Endothelial cell of umbilical vein (primary cell): ENCODE measurements at regions of chr9 and their contacts with region 1.

Region 1: DNA sequence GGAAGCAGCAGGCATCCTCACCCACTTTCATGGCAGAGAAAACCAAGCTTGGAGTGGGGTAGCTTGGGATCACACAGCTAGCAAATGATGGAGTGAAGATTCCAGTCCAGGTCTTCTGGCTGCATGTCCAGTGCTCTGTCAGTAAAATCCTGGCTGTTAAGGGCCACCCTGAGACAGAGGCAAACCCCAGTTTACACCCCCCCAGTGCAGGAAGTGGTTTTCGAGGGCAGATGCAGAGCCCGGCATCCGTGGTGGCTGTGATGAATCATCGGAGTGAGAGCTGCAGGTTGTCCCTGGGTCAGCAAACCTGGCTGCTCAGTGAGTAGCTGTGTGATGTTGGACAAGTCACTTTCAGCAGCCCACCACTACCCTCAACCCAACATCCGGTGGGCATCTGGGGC is 115.4 kb downstream of the RGS3 start:
- DNase-seq: peak; percentile 49
- H3K4me3 ChIP-seq: no peak overlapping the region
- H3K27ac ChIP-seq: peak overlapping the region; percentile 39
- H3K4me1 ChIP-seq: peaks cover 48% of the 10 kb centered on the region
- H3K27me3 ChIP-seq: no peaks in the 10 kb centered on the region
- CTCF ChIP-seq: no peak
- POLR2A ChIP-seq: no peak

Region 2: GRCh38 chr9:113541019-113541900 is 37.6 kb before region 1 on chr9:
- CTCF ChIA-PET with region 1: interaction called, 5 read pairs
- POLR2A ChIA-PET with region 1: no interaction called
- dilution Hi-C with region 1: no loop called
- intact Hi-C with region 1: loop called (anchors 1 kb)
- DNase-seq: peak; percentile 42
- H3K4me3 ChIP-seq: no peak overlapping the region
- H3K27ac ChIP-seq: no peak overlapping the region
- H3K4me1 ChIP-seq: peaks cover 5% of the 10 kb centered on the region
- H3K27me3 ChIP-seq: no peaks in the 10 kb centered on the region
- CTCF ChIP-seq: no peak
- POLR2A ChIP-seq: peak; percentile 10

Region 3: DNA sequence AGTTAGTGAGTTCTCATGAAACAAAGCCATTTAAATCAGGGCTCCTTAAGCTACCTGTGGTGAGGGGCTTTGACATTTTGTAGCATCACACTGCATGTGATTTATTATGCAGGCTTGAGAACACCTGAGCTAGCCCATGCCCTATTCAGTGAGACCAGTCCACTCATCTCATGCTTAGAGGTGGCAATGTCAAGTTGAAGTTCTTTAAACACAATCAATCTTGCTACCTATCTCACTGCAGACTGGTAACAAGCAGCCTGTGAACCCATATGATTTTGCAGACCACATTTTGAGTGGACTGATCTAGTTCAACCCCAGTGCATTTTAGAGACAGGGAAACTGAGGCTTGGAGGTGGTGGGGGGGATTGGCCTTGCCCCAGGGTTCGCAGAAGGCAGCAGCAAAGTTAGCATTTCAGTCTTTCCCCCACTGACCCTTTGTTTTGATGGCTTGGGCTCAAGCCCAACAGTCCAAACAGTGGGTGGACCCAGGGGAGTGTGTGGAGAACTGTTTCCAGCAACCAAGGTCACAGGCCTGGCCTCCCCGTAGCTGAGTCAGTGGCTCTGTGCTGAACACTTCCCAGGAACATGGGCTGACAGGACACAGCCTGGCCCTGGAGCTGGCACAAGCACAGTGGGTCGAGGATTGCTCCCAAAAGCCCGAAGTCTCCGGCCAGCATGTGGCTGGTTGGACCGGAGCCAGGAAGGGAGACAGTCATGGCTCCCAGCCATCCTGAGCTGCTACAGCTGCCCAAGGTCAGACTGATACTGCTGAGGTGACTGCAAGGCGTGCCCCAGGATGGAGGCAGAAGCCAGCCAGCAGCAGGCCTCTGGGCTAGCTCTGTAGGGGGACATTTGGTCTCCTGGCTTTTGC is 20.0 kb before region 1 on chr9:
- CTCF ChIA-PET with region 1: interaction called, 16 read pairs
- POLR2A ChIA-PET with region 1: no interaction called
- dilution Hi-C with region 1: no loop called
- intact Hi-C with region 1: no loop called
- DNase-seq: peak; percentile 79
- H3K4me3 ChIP-seq: no peak overlapping the region
- H3K27ac ChIP-seq: no peak overlapping the region
- H3K4me1 ChIP-seq: peaks cover 11% of the 10 kb centered on the region
- H3K27me3 ChIP-seq: no peaks in the 10 kb centered on the region
- CTCF ChIP-seq: no peak
- POLR2A ChIP-seq: no peak